ENCODE measurements at regions of chr3 and their contacts with region 1.

Region 1: GRCh38 chr3:46372492-46373359 is 2.0 kb downstream of the CCR5 start:
- DNase-seq: peak; percentile 82
- H3K4me3 Mint-ChIP-seq: peak overlapping the region; percentile 36
- H3K27ac Mint-ChIP-seq: peak overlapping the region; percentile 57
- H3K4me1 Mint-ChIP-seq: peaks cover 67% of the 10 kb centered on the region
- H3K27me3 Mint-ChIP-seq: peaks cover 32% of the 10 kb centered on the region

Region 2: DNA sequence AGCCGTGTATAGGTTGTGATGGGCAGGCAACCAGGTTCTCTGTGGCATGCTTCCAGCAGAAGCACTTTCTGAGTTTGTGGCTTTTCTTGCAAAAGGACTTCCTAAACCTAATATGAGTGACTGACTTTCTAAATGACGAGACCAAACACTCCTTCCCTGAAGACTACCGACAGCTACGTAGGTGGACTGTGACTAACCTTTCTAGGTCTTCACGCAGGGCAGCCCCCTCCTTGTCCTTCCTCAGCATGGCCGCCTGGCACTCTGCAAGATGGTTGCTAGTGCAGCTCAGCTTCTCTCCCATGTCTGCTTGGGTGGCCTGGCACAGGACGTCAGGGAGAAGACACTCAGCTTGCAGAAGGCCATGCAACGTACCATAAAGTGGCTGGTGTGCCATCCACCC is 408.6 kb before region 1 on chr3:
- intact Hi-C with region 1: loop called (anchors 2 kb)
- DNase-seq: peak; percentile 80
- H3K4me3 Mint-ChIP-seq: peak overlapping the region; percentile 67
- H3K27ac Mint-ChIP-seq: peak overlapping the region; percentile 81
- H3K4me1 Mint-ChIP-seq: peaks cover 69% of the 10 kb centered on the region
- H3K27me3 Mint-ChIP-seq: no peaks in the 10 kb centered on the region

Region 3: GRCh38 chr3:46098319-46098761 is 274.4 kb before region 1 on chr3:
- intact Hi-C with region 1: loop called (anchors 1 kb)
- DNase-seq: peak; percentile 91
- H3K4me3 Mint-ChIP-seq: peak overlapping the region; percentile 71
- H3K27ac Mint-ChIP-seq: peak overlapping the region; percentile 92
- H3K4me1 Mint-ChIP-seq: peaks cover 59% of the 10 kb centered on the region
- H3K27me3 Mint-ChIP-seq: peaks cover 11% of the 10 kb centered on the region

Region 4: GRCh38 chr3:46280105-46280797 is 92.5 kb before region 1 on chr3:
- intact Hi-C with region 1: loop called (anchors 1 kb)
- DNase-seq: peak; percentile 88
- H3K4me3 Mint-ChIP-seq: peak overlapping the region; percentile 34
- H3K27ac Mint-ChIP-seq: peak overlapping the region; percentile 72
- H3K4me1 Mint-ChIP-seq: peaks cover 74% of the 10 kb centered on the region
- H3K27me3 Mint-ChIP-seq: peaks cover 5% of the 10 kb centered on the region

Region 5: DNA sequence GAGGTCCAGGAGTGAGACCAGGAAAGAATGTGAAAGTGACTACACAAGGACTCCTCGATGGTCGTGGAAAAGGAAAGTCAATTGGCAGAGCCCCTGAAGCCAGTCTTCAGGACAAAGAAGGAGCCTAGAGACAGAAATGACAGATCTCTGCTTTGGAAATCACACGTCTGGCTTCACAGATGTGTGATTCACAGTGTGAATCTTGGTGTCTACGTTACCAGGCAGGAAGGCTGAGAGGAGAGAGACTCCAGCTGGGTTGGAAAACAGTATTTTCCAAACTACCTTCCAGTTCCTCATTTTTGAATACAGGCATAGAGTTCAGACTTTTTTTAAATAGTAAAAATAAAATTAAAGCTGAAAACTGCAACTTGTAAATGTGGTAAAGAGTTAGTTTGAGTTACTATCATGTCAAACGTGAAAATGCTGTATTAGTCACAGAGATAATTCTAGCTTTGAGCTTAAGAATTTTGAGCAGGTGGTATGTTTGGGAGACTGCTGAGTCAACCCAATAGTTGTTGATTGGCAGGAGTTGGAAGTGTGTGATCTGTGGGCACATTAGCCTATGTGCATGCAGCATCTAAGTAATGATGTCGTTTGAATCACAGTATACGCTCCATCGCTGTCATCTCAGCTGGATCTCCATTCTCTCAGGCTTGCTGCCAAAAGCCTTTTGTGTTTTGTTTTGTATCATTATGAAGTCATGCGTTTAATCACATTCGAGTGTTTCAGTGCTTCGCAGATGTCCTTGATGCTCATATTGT is 12.8 kb before region 1 on chr3:
- intact Hi-C with region 1: loop called (anchors 1 kb)
- DNase-seq: no peak
- H3K4me3 Mint-ChIP-seq: no peak overlapping the region
- H3K27ac Mint-ChIP-seq: no peak overlapping the region
- H3K4me1 Mint-ChIP-seq: peaks cover 50% of the 10 kb centered on the region
- H3K27me3 Mint-ChIP-seq: peaks cover 40% of the 10 kb centered on the region